ENCODE measurements at regions of chr17 and their contacts with region 1.

Region 1: GRCh38 chr17:7014261-7014994 is 2.0 kb downstream of the RNASEK start:
- DNase-seq: peak; percentile 96 to 98 (median 97)
- ATAC-seq: peak; percentile 89
- H3K4me3 ChIP-seq: peak overlapping the region; percentile 97
- H3K4me3 Mint-ChIP-seq: peak overlapping the region; percentile 85 to 99 (median 97)
- H3K27ac ChIP-seq: peak overlapping the region; percentile 99
- H3K27ac Mint-ChIP-seq: peak overlapping the region; percentile 97 to 100 (median 100)
- H3K4me1 ChIP-seq: peaks cover 31 to 52% of the 10 kb centered on the region in 2 donors
- H3K4me1 Mint-ChIP-seq: peaks cover 30 to 81% (median 63%) of the 10 kb centered on the region in 7 donors
- H3K27me3 ChIP-seq: no peaks in the 10 kb centered on the region
- H3K27me3 Mint-ChIP-seq: no peaks in the 10 kb centered on the region

Region 2: GRCh38 chr17:6640536-6641373 is 373.7 kb before region 1 on chr17 and contains the starts of genes KIAA0753 and TXNDC17:
- CTCF ChIA-PET with region 1: no interaction called
- POLR2A ChIA-PET with region 1: no interaction called
- intact Hi-C with region 1: loop called (anchors 1 to 5 kb)
- DNase-seq: peak; percentile 75 to 97 (median 85)
- ATAC-seq: peak; percentile 94
- H3K4me3 ChIP-seq: peak within 1 kb of the TSS; percentile 91
- H3K4me3 Mint-ChIP-seq: peak within 1 kb of the TSS; percentile 90 to 98 (median 96)
- H3K27ac ChIP-seq: peak within 1 kb of the TSS; percentile 86
- H3K27ac Mint-ChIP-seq: peak within 1 kb of the TSS; percentile 88 to 99 (median 97)
- H3K4me1 ChIP-seq: peaks cover 17 to 24% of the 10 kb centered on the region in 2 donors
- H3K4me1 Mint-ChIP-seq: peaks cover 35 to 64% (median 48%) of the 10 kb centered on the region in 7 donors
- H3K27me3 ChIP-seq: no peaks in the 10 kb centered on the region
- H3K27me3 Mint-ChIP-seq: no peaks in the 10 kb centered on the region
- total RNA-seq, gene KIAA0753: 12.4 to 18.4 (median 17.9) TPM
- total RNA-seq, gene TXNDC17: 14.3 to 70.3 (median 18.5) TPM

Region 3: GRCh38 chr17:7035591-7036368 is 21.4 kb after region 1 on chr17 and contains the start of gene SLC16A13:
- CTCF ChIA-PET with region 1: interaction called, 4 read pairs
- POLR2A ChIA-PET with region 1: interaction called, 30 read pairs
- intact Hi-C with region 1: loop called (anchors 1 kb)
- DNase-seq: peak; percentile 87 to 99 (median 97)
- ATAC-seq: peak; percentile 95
- H3K4me3 ChIP-seq: peak within 1 kb of the TSS; percentile 67
- H3K4me3 Mint-ChIP-seq: peak within 1 kb of the TSS; percentile 89 to 95 (median 93)
- H3K27ac ChIP-seq: peak within 1 kb of the TSS; percentile 94
- H3K27ac Mint-ChIP-seq: peak within 1 kb of the TSS; percentile 96 to 99 (median 98)
- H3K4me1 ChIP-seq: peaks cover 26 to 36% of the 10 kb centered on the region in 2 donors
- H3K4me1 Mint-ChIP-seq: peaks cover 39 to 80% (median 58%) of the 10 kb centered on the region in 7 donors
- H3K27me3 ChIP-seq: no peaks in the 10 kb centered on the region
- H3K27me3 Mint-ChIP-seq: no peaks in the 10 kb centered on the region
- total RNA-seq, gene SLC16A13: 3.4 to 20.9 (median 15.0) TPM

Region 4: GRCh38 chr17:7204828-7205461 is 190.5 kb after region 1 on chr17:
- CTCF ChIA-PET with region 1: no interaction called
- POLR2A ChIA-PET with region 1: no interaction called
- intact Hi-C with region 1: loop called in 1 of 2 experiments (anchors 1 kb)
- DNase-seq: peak; percentile 90 to 99 (median 97)
- ATAC-seq: peak; percentile 90
- H3K4me3 ChIP-seq: peak overlapping the region; percentile 77
- H3K4me3 Mint-ChIP-seq: peak overlapping the region; percentile 67 to 94 (median 85)
- H3K27ac ChIP-seq: peak overlapping the region; percentile 91
- H3K27ac Mint-ChIP-seq: peak overlapping the region; percentile 88 to 99 (median 95)
- H3K4me1 ChIP-seq: peaks cover 15 to 17% of the 10 kb centered on the region in 2 donors
- H3K4me1 Mint-ChIP-seq: peaks cover 28 to 39% (median 32%) of the 10 kb centered on the region in 7 donors
- H3K27me3 ChIP-seq: no peaks in the 10 kb centered on the region
- H3K27me3 Mint-ChIP-seq: no peaks in the 10 kb centered on the region

Region 5: DNA sequence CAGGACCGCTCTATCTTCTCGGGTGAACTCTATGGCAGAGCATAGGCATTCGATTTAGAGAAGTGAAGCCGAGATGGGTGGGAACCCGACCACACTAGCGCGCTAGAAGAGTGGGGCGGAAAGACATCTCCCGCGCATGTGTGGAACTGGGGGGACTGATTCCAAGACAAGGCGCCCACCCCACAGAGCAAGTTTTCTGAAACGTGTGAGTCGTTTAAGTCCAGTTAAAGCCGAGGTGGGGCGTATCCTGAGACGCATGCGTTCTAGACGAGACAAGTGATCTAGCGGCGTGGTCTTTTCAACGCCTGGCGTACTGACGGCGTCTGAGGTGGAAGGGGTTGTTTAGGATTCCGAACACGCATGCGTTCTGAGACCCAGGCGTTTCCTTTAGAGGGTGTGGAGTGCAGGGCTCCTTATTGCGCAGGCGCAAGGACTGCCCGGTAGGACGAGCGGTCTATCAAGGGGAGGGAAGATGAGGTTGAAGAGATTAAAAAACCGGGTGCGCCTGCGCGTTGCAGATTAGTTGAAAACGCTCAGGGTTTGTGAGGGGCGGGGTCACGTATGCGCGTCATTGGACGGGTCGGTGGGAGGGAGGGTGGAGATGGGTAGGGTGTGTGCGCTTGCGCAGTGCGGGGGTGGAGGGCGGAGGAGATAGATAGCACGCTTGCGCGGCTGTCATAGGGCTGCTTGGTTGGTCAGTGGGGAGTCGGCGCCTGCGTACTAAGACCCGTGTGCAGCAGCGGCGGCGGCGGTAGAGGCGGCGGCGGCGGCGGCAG is 292.7 kb after region 1 on chr17 and contains the start of gene EIF5A:
- CTCF ChIA-PET with region 1: no interaction called
- POLR2A ChIA-PET with region 1: no interaction called
- intact Hi-C with region 1: loop called in 1 of 2 experiments (anchors 1 kb)
- DNase-seq: peak; percentile 99 to 100 (median 100)
- ATAC-seq: peak; percentile 79
- H3K4me3 ChIP-seq: peak within 1 kb of the TSS; percentile 78
- H3K4me3 Mint-ChIP-seq: peak within 1 kb of the TSS; percentile 90 to 99 (median 95)
- H3K27ac ChIP-seq: peak within 1 kb of the TSS; percentile 100
- H3K27ac Mint-ChIP-seq: peak within 1 kb of the TSS; percentile 98 to 100 (median 99)
- H3K4me1 ChIP-seq: peaks cover 19 to 20% of the 10 kb centered on the region in 2 donors
- H3K4me1 Mint-ChIP-seq: peaks cover 28 to 44% (median 35%) of the 10 kb centered on the region in 7 donors
- H3K27me3 ChIP-seq: no peaks in the 10 kb centered on the region
- H3K27me3 Mint-ChIP-seq: peaks cover 0 to 9% (median 0%) of the 10 kb centered on the region in 5 donors
- total RNA-seq, gene EIF5A: 237 to 666 (median 453) TPM

Region 6: DNA sequence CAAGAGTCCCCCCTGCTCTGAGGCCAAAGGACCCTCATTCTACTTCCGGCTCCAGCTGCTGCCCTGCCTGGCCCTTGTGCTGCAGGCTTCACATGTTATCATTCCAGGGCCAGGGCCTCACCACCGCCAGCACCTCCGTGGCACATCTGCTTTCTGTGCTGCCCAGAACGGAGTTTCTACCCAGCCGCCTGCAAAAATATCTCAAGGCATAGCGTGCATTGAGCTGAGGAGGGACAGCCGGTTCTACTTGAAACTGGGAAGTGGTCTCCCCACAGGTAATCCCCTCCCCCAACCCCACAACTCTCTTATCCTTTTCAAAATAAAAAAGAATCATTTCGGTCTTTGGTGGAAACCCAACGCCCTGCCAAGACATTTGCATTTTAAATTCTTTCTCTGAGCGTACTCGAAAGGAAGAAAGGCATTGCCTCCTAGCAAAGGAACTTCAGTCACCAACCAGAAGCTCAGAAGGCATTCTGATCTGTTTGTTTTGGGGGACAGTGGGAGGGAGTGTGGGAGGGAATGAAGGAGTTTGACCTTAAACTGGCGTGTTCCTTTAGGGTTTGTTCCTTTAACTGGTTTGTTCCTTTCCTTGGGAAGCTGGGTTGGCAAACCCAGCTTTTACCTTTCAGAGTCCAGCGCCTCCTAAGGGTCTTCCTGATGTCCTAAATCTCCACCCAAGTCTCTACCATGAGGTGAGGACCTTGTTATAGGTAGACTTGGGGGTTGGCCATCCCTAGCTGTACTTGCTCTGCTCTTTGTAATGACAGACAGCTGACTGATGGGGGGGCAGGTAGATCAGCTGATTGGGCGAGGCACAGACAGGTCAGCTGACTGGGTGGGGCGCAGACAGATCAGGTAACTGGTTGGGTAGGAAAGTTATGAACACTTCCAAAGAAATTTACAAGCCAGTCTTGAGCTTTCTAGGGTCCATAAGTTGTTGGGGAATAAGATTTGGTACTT is 1886.5 kb after region 1 on chr17:
- CTCF ChIA-PET with region 1: no interaction called
- POLR2A ChIA-PET with region 1: no interaction called
- intact Hi-C with region 1: loop called in 1 of 2 experiments (anchors 2 kb)
- DNase-seq: peak in 8 of 9 donors; percentile 5 to 49 (median 33)
- ATAC-seq: no peak
- H3K4me3 ChIP-seq: no peak overlapping the region
- H3K4me3 Mint-ChIP-seq: peak overlapping the region; percentile 12 to 83 (median 64)
- H3K27ac ChIP-seq: peak overlapping the region; percentile 80
- H3K27ac Mint-ChIP-seq: peak overlapping the region in 8 of 9 donors; percentile 78 to 99 (median 96)
- H3K4me1 ChIP-seq: peaks cover 45 to 58% of the 10 kb centered on the region in 2 donors
- H3K4me1 Mint-ChIP-seq: peaks cover 52 to 78% (median 66%) of the 10 kb centered on the region in 7 donors
- H3K27me3 ChIP-seq: no peaks in the 10 kb centered on the region
- H3K27me3 Mint-ChIP-seq: no peaks in the 10 kb centered on the region